H1 (cell line): ENCODE measurements at regions of chr22 and their contacts with region 1.

Region 1: DNA sequence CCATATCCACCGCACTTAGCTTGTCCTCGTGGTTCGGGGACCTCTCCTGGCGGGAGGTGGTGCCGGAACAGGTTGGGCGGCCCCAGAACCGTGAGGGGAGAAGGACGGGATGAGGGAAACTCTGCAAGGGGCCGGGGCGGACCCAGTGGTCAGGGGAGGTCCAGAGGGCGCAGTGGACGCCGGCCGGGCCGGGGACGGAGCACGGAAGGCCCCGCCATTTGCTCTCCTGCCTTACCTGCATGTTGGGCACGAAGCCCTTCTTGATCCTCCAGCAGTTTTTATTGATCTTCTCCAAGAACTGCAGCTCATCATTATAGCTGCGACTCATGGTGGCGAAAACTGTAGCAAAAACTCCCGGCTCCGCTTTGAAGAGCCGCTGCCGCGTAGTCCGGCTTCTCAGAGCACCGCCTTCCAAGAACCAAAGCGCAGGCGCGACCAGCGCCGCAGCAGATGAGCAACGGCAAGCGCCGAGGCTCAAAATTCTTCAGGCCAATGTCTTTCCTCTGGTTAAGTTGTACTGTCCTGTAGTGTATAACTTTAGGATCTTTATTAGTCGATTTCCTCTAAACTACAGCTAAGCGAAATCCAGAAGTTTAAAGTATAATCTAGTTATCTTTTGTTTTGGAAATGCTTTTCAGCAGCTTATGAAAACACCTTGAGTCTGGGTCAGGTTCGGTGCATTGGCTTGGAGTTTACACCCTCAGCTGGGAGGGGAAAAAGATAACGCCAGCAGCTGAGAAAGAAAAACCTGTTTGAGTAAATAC is at the start of gene RTCB:
- DNase-seq: peak; percentile 73 to 92
- H3K4me3 ChIP-seq: peak within 1 kb of the TSS; percentile 83 to 90 (median 87)
- H3K27ac ChIP-seq: peak within 1 kb of the TSS; percentile 29; the same call in 1 of the 2 replicates
- H3K4me1 ChIP-seq: no peaks in the 10 kb centered on the region; a peak in 1 of 7 replicates
- H3K27me3 ChIP-seq: no peaks in the 10 kb centered on the region; a peak in 1 of 7 replicates
- CTCF ChIP-seq: no peak
- EP300 ChIP-seq: no peak
- POLR2A ChIP-seq: peak in 1 of 2 experiments; percentile 82; a peak in 2 of 3 replicates
- RAD21 ChIP-seq: no peak
- total RNA-seq, gene RTCB: 111 and 114 TPM in 2 replicates

Region 2: GRCh38 chr22:32444068-32444467 is 32.1 kb after region 1 on chr22:
- CTCF ChIA-PET with region 1: interaction called, 17 read pairs
- POLR2A ChIA-PET with region 1: no interaction called
- DNase-seq: no peak
- H3K4me3 ChIP-seq: no peak overlapping the region
- H3K27ac ChIP-seq: no peak overlapping the region
- H3K4me1 ChIP-seq: no peaks in the 10 kb centered on the region
- H3K27me3 ChIP-seq: peaks cover 0 to 18% (median 6%) of the 10 kb centered on the region in 4 experiments; a peak in 4 of 7 replicates
- CTCF ChIP-seq: peak; percentile 38 to 55 (median 38); a peak in 3 of 4 replicates
- EP300 ChIP-seq: no peak
- POLR2A ChIP-seq: no peak
- RAD21 ChIP-seq: peak; percentile 55 to 69

Region 3: DNA sequence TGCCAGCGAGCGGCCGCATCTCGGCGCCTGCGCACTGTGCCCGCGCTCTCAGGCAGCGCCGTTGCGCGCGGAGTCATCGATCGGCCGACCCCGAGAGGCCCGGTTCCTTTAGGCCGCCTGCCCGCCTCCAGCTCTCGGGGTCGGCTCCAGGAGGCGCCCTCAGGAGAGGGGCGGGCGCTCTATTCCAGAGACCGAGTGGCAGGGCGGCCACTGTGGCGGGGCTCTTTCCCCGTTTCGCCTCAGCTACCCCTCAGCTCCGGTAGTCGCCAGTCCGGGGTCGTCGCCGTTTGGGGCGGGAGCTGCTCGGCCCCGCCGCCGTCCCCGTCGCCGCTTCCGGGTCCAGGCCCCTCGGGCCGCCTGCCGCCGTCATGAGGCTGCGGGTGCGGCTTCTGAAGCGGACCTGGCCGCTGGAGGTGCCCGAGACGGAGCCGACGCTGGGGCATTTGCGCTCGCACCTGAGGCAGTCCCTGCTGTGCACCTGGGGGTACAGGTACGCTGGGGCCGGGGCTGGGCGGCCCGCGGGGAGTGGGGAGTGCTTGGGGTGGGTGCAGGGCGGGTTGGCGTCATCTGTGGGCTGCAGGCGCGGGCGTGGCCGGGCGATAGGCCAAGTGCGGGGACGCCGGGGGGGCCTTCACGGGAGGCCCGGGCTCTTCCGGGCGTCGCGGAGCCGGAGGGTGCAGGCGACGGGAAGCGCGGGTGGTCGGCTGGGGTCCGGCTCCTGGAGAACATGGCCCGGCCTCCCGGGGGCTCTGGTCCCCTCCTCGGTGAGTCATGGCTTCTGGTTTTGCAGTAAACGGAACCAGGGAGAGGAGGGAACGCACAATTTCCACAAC is 62.8 kb after region 1 on chr22 and contains the start of gene FBXO7:
- CTCF ChIA-PET with region 1: interaction called, 13 read pairs
- POLR2A ChIA-PET with region 1: interaction called, 11 read pairs
- DNase-seq: peak; percentile 69 to 93
- H3K4me3 ChIP-seq: peak within 1 kb of the TSS; percentile 66 to 89 (median 77)
- H3K27ac ChIP-seq: peak within 1 kb of the TSS; percentile 51; the same call in 1 of the 2 replicates
- H3K4me1 ChIP-seq: peaks cover 0 to 3% (median under 1%) of the 10 kb centered on the region in 4 experiments; a peak in 2 of 7 replicates
- H3K27me3 ChIP-seq: no peaks in the 10 kb centered on the region
- CTCF ChIP-seq: peak in 2 of 3 experiments; percentile 25 to 44; a peak in 2 of 4 replicates
- EP300 ChIP-seq: no peak
- POLR2A ChIP-seq: peak; percentile 25 to 60
- RAD21 ChIP-seq: peak in 1 of 2 experiments; percentile 8; a peak in 1 of 4 replicates
- total RNA-seq, gene FBXO7: 59.1 and 62.7 TPM in 2 replicates

Region 4: DNA sequence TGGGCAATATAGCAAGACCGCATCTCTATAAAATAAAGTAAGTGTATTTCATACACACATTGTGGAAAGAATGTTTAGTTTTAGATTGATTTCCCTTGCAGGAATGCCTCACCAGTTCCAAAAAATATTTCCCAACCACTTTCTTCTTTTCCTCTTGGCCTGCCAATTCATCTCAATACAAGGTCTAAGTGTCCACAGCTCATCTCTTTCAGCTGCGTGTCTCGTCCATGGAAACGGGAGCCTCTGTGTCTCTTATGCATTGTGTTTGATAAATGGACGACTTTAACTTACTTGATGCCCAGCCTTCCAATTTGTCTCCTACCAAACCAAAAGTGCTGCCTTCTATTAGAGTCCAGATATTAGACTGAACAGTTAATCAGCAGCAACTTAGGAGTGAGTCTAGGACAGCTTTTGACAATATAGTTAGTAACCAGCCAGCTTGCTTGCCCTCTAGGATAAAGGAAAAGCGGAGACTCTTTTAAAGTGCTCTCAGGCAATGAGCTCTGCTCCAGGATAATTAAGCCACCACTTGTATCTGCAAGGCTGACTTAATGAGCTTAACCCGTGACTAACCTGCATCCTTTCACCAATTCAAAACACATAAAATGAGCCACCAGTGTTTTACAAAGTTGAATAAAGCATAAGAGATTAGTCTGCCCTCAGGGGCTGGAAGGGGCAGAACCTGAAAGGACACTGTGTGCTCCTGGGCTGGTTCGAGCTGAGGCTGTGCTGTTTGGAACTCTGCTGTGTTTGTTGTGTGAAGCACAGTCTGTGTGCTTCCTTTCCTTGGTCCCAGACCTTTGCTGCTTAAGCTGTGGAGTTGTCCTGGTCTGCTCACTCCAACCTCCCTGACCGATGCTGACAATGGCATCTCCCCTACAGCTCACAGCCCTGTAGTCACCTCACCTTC is 90.1 kb after region 1 on chr22:
- CTCF ChIA-PET with region 1: no interaction called
- POLR2A ChIA-PET with region 1: no interaction called
- DNase-seq: no peak
- H3K4me3 ChIP-seq: no peak overlapping the region
- H3K27ac ChIP-seq: no peak overlapping the region
- H3K4me1 ChIP-seq: peaks cover 0 to 4% (median 2%) of the 10 kb centered on the region in 4 experiments; a peak in 4 of 7 replicates
- H3K27me3 ChIP-seq: no peaks in the 10 kb centered on the region
- CTCF ChIP-seq: no peak
- EP300 ChIP-seq: no peak
- POLR2A ChIP-seq: no peak
- RAD21 ChIP-seq: no peak